Panc1 (cell line): ENCODE measurements at regions of chr11 and their contacts with region 1.

Region 1: DNA sequence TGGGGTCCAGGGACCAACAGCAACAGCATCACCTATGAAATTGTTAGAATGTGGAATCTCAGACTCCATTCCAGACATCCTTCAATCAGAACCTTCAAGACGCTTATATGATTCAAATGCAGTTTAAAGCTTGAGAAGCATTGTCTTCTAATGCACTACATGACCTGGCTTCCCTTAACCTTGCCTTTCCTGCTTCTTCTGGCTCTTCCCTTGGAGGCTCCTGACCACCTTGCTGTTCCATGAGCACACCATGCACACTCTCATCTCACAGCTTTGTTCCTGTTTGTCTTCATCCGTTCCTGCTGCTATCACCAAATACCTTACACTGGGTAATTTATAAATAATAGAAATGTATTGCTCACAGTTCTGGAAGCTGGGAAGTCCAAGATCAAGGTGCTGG is 26.1 kb downstream of the ZC3H12C start:
- DNase-seq: no peak
- ATAC-seq: no peak
- H3K4me3 ChIP-seq: no peak overlapping the region
- H3K27ac ChIP-seq: no peak overlapping the region
- H3K4me1 ChIP-seq: peaks cover 9% of the 10 kb centered on the region
- H3K27me3 ChIP-seq: no peaks in the 10 kb centered on the region
- CTCF ChIP-seq: no peak

Region 2: DNA sequence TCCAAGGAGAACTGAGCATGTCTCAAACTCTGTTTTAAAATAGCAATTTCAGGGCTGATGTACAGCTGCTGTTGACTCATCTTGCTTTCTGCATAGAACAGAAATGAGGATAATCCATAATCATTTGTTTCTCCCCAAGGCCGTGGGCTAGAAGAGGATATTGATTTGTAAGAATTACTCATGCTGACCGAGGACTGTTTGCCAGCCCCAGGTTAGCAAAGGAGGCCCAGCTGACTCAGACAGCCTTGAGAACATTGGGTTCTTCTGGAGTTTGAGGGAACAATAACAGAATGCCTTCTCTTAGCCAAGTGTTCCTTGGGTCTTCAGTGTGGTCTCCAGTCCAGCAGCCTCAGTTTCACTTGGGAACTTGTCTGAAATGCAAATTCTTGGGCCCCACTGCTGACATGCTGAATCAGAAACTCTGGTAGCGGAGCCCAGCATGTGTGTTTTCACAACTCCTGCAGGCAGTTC is 65.8 kb after region 1 on chr11:
- CTCF ChIA-PET with region 1: no interaction called
- POLR2A ChIA-PET with region 1: no interaction called
- in situ Hi-C with region 1: no loop called
- intact Hi-C with region 1: no loop called
- DNase-seq: no peak
- ATAC-seq: no peak
- H3K4me3 ChIP-seq: no peak overlapping the region
- H3K27ac ChIP-seq: no peak overlapping the region
- H3K4me1 ChIP-seq: no peaks in the 10 kb centered on the region
- H3K27me3 ChIP-seq: no peaks in the 10 kb centered on the region
- CTCF ChIP-seq: no peak

Region 3: DNA sequence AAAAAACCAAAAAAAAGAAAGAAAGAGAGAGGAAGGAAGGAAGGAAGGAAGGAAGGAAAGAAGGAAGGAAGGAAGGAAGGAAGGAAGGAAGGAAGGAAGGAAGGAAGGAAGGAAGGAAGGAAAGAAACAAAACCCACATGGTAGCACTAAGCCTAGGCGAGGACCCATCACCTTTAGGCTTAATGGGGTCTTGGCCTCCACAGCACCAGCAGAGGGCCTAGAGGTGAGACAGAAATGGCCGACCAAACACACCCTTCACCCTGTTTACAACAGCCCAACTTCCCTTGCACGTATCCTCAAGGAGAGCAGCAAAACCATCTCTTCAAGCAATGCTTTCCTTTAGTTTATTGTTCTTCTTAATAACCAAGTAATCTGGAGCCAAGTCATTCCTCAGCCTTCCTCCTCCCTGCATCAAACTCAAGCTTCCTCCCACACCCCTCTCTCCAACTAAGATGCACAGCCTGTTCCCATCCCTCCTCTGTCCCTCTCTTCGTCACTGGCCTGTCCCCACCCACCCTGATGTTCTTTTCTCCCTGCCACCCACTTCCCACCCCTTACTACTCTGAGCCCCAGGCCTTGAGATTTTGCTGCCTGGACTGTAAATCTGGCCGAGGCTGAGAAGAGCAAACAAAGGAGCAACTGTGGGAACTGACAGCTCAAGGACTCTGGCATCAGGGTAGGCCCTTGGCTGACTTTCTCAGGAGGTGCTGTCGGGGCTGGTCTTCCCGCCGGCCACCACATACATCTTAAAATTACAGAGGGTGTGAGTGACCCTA is 1233.8 kb after region 1 on chr11:
- CTCF ChIA-PET with region 1: no interaction called
- POLR2A ChIA-PET with region 1: interaction called, 11 read pairs
- in situ Hi-C with region 1: no loop called
- intact Hi-C with region 1: no loop called
- DNase-seq: no peak
- ATAC-seq: no peak
- H3K4me3 ChIP-seq: no peak overlapping the region
- H3K27ac ChIP-seq: no peak overlapping the region
- H3K4me1 ChIP-seq: no peaks in the 10 kb centered on the region
- H3K27me3 ChIP-seq: 0 out of 2 replicates have a peak, but pooled peaks cover 3% of the 10 kb centered on the region
- CTCF ChIP-seq: no peak